AG04449 (cell line): ENCODE measurements at regions of chr15 and their contacts with region 1.

Region 1: DNA sequence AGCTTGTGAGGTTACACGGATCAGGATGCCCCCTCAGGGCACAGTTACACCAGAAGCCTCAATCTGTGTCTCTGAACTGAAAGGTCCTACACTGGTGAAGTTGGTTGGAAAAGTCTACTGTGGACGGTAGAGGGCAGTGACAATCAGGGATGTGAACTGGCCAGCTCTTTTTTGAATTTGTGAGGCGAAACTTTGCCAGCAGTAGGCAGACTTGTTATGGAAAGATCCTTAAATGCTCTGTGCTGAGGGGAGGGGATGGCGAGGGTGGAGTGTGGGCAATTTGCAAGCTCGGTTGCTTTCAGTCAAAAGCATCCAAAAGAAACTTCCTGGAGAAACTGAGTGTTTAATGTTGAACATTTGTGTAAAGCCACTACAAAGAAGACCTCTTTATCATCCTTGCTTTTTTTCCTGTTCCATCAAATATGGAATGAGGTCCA is 127.4 kb upstream of the ABHD17C start:
- DNase-seq: peak; percentile 52
- H3K4me3 ChIP-seq: no peak overlapping the region
- CTCF ChIP-seq: peak; percentile 81

Region 2: DNA sequence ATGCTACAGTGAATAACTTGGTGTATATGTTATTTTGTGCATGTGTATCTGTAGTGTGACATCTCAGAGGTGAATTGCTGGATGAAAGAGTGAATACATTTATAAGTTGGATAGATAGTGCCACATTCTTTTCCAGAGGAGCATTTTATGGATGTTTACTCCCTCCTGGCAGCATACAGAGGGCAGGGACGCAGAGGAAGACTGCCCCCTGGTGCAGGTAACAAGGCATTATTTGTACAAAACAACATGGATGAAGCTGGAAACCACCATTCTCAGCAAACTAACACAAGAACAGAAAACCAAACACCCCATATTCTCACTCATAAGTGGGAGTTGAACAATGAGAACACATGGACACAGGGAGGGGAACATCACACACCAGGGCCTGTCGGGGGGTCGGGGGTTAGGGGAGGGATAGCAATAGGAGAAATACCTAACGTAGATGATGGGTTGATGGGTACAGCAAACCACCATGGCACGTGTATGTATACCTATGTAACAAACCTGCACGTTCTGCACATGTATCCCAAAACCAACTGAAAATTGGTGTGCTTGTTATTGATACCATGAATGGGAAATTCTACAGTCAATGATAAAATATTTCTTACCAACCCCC is 257.9 kb before region 1 on chr15:
- CTCF ChIA-PET with region 1: no interaction called
- POLR2A ChIA-PET with region 1: no interaction called
- DNase-seq: peak; percentile 1
- H3K4me3 ChIP-seq: no peak overlapping the region
- CTCF ChIP-seq: peak; percentile 35

Region 3: DNA sequence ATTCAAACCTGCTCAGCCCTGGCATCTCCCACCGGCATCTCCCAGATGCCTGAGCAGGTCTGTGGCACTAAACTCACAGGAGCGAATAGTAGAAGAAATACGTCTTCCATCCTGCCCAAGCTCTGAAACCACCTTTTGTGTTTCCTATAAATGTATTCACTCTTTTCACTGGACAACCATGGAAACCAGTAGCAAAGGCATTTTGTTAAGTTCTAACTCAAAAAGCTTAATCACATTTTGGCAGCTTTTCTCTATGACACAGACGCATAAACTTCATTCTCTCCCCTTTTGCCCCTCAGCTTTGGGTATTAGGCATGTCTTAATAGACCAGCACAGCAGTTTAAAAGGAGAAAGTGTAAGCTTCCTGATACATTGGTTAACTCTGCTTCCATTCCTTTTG is 188.0 kb before region 1 on chr15:
- CTCF ChIA-PET with region 1: no interaction called
- POLR2A ChIA-PET with region 1: no interaction called
- DNase-seq: no peak
- H3K4me3 ChIP-seq: no peak overlapping the region
- CTCF ChIP-seq: no peak

Region 4: GRCh38 chr15:80418892-80419537 is 148.7 kb before region 1 on chr15:
- CTCF ChIA-PET with region 1: interaction called, 19 read pairs
- POLR2A ChIA-PET with region 1: no interaction called
- DNase-seq: no peak
- H3K4me3 ChIP-seq: no peak overlapping the region
- CTCF ChIP-seq: peak; percentile 73

Region 5: GRCh38 chr15:80474224-80475215 is 93.2 kb before region 1 on chr15:
- CTCF ChIA-PET with region 1: interaction called, 10 read pairs
- POLR2A ChIA-PET with region 1: no interaction called
- DNase-seq: no peak
- H3K4me3 ChIP-seq: no peak overlapping the region
- CTCF ChIP-seq: no peak

Region 6: GRCh38 chr15:80550219-80550907 is 17.4 kb before region 1 on chr15:
- CTCF ChIA-PET with region 1: interaction called, 56 read pairs
- POLR2A ChIA-PET with region 1: no interaction called
- DNase-seq: peak; percentile 89
- H3K4me3 ChIP-seq: peak overlapping the region; percentile 6
- CTCF ChIP-seq: no peak

Region 7: DNA sequence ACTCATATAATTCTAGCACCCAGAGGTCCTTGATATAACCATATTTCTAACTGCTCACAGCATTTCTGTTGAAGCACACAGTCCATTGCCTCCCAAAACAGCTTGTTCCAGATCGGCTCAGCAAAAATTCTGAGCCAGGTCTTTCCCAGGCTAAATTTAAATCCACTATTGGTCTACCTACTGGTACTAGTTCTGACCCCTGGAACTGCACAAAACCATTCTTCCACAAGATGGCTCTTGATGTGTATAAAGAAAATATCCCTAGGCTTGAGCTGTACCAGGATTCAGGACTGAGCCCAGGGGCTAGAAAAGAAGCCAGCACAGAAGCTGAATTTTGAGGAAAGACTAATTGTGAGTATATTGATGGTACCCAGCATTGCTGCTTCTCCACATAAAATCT is 51.9 kb after region 1 on chr15:
- CTCF ChIA-PET with region 1: interaction called, 12 read pairs
- POLR2A ChIA-PET with region 1: no interaction called
- DNase-seq: no peak
- H3K4me3 ChIP-seq: no peak overlapping the region
- CTCF ChIP-seq: no peak

Region 8: GRCh38 chr15:80783260-80783659 is 215.5 kb after region 1 on chr15:
- CTCF ChIA-PET with region 1: interaction called, 285 read pairs
- POLR2A ChIA-PET with region 1: interaction called, 8 read pairs
- DNase-seq: no peak
- H3K4me3 ChIP-seq: no peak overlapping the region; the same call in none of the 2 replicates
- CTCF ChIP-seq: no peak

Region 9: GRCh38 chr15:80970018-80970658 is 402.4 kb after region 1 on chr15:
- CTCF ChIA-PET with region 1: interaction called, 49 read pairs
- POLR2A ChIA-PET with region 1: no interaction called
- DNase-seq: no peak
- H3K4me3 ChIP-seq: no peak overlapping the region
- CTCF ChIP-seq: peak; percentile 63